HEK293 (cell line): ENCODE measurements at regions of chr18 and their contacts with region 1.

Region 1: DNA sequence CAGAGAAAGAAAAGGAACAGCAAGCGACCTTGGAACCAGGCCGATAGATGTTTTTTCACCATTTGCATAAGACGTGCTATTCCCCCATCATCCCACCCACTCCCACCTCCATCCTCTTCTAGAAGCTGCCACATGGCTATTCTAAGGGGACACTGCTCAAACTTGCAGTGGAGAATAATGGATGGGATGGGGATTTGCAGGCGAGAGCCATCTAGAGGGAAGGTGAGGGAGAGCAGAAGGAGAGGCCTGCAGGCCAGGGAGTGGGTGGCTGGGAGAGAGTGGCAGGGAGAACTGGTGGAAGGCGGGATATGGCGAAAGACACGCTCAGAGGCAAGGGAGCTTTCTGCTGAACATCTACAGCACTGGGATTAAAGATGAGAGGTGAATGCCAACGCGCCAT is 84.9 kb downstream of the MAPK4 start:
- H3K4me3 ChIP-seq: no peak overlapping the region
- H3K27ac ChIP-seq: no peak overlapping the region
- H3K4me1 ChIP-seq: no peaks in the 10 kb centered on the region
- CTCF ChIP-seq: peak; percentile 64

Region 2: GRCh38 chr18:50614838-50615237 is 30.0 kb before region 1 on chr18:
- CTCF ChIA-PET with region 1: no interaction called
- POLR2A ChIA-PET with region 1: no interaction called
- H3K4me3 ChIP-seq: no peak overlapping the region
- H3K27ac ChIP-seq: no peak overlapping the region
- H3K4me1 ChIP-seq: no peaks in the 10 kb centered on the region
- CTCF ChIP-seq: no peak

Region 3: DNA sequence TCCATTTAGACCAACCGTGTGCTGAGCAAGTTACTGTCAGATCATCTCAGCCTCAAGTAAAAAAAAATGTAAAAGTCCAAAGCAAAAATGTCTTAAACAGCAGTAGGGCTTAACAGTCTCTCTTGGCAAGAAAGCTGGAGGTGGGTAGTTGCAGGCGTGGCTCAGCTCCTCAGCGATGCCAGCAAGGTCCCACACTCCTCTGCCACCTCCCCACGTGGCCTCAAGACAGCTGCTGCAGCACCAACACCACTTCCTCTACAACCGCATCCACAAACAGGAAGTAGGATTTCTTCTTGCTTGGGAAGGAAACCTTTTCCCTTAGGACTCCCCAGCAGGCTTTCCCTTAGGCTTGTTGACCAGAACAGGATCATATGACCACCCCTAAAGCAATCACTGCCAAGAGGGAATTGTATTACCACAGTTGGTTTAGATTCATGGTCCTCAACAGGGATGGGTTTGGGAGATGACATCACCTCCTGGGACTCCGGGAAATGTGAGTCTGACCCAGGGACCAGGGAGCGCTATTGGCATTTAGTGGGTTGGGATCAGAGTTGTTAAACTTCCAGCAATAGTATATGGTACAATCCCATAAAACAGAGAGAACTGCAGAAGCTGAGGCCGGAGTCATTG is 12.1 kb after region 1 on chr18:
- CTCF ChIA-PET with region 1: interaction called, 11 read pairs
- POLR2A ChIA-PET with region 1: no interaction called
- H3K4me3 ChIP-seq: no peak overlapping the region
- H3K27ac ChIP-seq: no peak overlapping the region
- H3K4me1 ChIP-seq: no peaks in the 10 kb centered on the region
- CTCF ChIP-seq: no peak

Region 4: DNA sequence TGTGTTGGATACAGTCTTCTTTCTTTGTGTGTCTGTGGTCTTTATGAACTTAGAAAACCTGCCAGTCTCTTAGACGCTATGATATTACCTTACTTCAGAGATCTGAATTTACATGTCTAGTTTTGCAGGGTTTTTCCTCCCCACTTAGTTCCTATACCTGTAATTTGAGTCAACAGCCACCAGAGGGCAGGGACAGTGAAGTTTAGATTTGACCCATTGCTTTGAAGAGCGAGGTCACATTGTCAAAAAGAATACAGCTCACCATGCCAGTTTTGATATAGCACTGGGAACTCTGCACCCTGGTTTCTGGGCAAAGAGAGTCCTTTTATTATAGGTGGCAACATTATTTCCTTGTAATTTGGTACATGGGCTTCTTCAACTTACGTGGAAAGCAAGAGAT is 17.4 kb after region 1 on chr18:
- CTCF ChIA-PET with region 1: interaction called, 11 read pairs
- POLR2A ChIA-PET with region 1: no interaction called
- H3K4me3 ChIP-seq: no peak overlapping the region
- H3K27ac ChIP-seq: no peak overlapping the region
- H3K4me1 ChIP-seq: no peaks in the 10 kb centered on the region
- CTCF ChIP-seq: peak; percentile 18; the same call in 1 of the 2 replicates

Region 5: DNA sequence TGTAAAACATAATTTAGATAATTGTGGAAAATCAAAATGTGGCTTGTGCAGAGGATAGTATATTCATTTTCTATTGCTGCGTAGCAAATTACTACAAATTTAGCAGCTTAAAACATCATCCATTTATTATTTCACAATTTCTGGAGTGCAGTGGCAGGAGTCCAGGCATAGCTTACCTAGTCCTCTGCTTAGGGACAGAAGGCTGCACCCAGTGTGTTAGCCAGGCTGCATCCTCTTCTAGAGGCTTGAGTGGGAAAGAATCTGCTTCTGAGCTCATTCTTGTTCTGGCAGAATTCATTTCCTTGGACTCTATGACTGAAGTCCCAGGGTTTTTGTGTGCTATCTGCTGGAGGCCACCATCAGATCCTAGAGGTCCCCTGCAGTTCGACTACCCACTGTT is 135.3 kb after region 1 on chr18:
- CTCF ChIA-PET with region 1: no interaction called
- POLR2A ChIA-PET with region 1: no interaction called
- H3K4me3 ChIP-seq: no peak overlapping the region
- H3K27ac ChIP-seq: no peak overlapping the region
- H3K4me1 ChIP-seq: no peaks in the 10 kb centered on the region
- CTCF ChIP-seq: no peak